Posterior vena cava (tissue), 2 donors: ENCODE measurements at regions of chr16 and their contacts with region 1.

Region 1: DNA sequence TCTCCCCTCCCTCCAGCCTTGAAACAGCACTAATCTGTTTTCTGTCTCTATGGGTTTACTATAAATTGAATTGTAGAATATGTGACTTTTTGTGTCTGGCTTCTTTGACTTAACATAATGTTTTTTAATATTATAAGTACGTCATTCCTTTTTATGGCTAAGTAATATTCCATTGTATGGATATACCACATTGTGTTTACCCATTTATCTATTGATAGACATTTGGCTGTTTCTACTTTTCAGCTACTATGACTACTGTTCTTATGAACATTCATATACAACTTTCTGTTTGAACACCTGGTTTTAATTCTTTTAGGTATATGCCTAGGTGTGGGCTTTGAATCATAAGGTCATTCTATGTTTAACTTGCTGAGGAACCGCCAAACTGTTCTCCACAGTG is 961.9 kb downstream of the CDH8 start:
- DNase-seq: no peak

Region 2: DNA sequence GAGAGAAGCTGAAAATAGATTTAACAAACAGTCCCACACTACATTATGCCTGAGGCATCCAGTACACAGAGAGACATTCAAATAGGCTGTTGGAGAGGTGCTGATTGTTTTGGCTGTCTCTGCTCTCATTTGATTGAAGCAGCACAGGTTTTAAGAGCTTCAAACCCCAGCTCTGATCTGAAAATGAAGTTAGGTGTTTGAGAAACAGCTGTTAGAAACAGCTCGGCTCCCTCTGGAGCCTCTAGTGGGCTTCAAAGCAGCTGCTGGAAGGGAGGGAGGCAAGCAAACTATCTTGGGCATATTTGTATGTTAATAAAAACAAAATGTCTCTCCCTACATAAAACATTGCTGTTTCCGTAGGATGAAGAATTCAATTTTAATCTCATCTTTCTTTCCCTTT is 1733.0 kb before region 1 on chr16:
- intact Hi-C with region 1: no loop called
- DNase-seq: no peak

Region 3: GRCh38 chr16:61050547-61050946 is 23.8 kb before region 1 on chr16:
- intact Hi-C with region 1: loop called in 1 of 2 experiments (anchors 1 kb)
- DNase-seq: no peak